ENCODE measurements at regions of chr2 and their contacts with region 1.

Region 1: GRCh38 chr2:228318218-228318617 is 136.7 kb upstream of the SPHKAP start:
- DNase-seq: no peak
- ATAC-seq: peak; percentile 73 to 79

Region 2: DNA sequence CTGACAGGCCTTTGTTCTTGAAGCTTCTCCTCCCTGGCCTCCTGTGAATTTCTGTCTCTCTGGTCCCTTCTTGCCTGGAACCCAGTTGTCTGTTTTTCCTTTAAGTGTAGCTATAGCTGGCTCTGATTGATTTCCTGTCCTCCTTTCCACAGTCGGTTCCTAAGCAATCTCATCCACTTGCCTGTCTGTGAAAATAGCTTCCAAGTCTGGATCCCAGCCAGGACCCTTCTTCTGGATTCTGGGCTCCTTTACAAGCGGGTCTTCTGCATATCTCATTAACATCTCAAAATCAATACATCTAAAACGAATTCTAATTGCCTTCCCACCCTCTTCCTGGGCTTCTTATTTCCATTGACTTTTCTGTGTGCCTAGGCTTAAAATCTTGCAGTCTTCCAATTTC is 321.9 kb before region 1 on chr2:
- intact Hi-C with region 1: no loop called
- DNase-seq: no peak
- ATAC-seq: no peak

Region 3: DNA sequence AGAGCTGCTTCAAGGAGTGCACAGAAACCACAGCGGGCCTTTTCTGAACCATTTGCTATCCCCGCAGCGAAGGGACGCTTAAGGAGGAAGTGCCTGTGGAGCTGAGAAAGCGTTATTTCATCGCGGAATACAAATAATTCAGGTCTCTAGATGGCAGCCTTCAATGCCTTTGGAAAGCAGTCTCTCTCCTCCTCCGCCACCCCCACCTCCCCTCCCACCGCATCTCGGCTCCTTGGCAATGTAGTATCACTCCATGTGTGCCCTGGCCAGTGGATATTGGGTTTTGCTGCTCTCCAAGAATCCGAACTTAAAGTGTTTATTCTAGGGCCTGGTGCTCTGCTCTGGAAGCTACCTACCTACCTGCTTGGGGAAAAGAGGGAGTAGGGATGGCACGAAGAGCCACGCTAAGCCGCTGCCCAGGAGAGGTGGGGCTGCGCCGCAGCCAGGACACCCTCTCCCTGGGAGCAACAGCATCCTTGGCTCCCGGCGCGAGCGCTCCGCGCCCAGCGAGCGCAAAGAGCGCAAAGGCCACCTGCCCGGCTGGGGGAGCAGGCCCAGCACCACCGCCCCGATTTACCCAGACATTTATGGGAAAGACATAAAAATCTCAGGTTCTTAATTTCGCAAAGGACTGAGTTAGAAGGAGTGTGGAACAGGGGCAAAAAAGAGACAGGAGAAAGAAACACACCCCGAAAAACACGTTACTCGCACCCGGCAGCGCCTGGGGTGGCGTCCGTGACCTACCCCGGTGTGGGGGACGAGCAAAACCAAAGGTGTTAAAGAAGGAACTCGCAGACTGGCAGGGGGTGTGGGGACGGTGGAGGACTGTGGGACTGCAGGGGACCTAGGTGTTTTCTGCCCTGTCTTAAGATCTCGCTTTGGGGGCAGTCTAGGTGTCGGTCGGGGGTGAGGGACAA is 137.8 kb before region 1 on chr2:
- intact Hi-C with region 1: loop called in 1 of 2 experiments (anchors 10 kb)
- DNase-seq: peak; percentile 21
- ATAC-seq: peak; percentile 74 to 77

Region 4: GRCh38 chr2:228652366-228652765 is 334.1 kb after region 1 on chr2:
- intact Hi-C with region 1: loop called in 1 of 2 experiments (anchors 5 kb)
- DNase-seq: no peak
- ATAC-seq: no peak

Measured in left cardiac atrium (tissue), 4 donors.